ENCODE measurements at regions of chr10 and their contacts with region 1.

Region 1: GRCh38 chr10:80187465-80188409 is 17.6 kb downstream of the ANXA11 start:
- DNase-seq: peak; percentile 88
- H3K4me3 Mint-ChIP-seq: peak overlapping the region; percentile 67
- H3K27ac Mint-ChIP-seq: peak overlapping the region; percentile 95
- H3K4me1 Mint-ChIP-seq: peaks cover 73% of the 10 kb centered on the region
- H3K27me3 Mint-ChIP-seq: no peaks in the 10 kb centered on the region

Region 2: DNA sequence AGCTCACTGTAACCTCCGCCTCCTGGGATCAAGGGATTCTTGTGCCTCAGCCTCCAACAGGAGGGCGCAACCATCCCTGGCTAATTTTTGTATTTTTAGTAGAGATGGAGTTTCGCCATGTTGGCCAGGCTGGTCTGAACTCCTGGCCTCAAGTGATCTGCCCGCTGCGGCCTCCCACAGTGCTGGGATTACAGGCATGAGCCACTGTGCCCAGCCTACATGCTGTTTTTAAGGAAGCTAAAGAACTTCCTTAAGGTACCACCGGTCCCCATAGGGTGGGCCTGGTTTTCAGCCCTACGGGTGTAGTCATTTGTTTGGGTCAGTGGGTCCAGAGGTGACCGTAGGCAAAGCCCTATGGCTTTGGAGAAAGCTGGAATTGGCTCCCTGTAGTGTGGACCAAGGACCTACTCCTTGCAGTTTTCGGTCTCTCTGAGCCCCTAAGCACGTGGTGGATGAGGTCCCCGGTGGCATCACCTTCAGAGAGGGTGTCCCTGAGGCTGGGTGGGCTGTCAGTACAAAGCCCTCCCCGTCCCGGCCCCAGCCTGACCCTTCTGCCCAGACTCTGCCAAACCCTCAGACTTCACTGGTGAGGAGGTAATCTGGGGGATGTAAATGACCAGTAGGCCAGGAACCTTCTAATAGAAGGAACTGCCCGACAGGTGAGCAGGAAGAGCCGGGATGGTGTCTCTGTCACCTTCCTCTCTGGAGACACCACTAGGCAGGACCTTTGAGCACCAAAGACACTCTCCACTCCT is 12.9 kb before region 1 on chr10:
- CTCF ChIA-PET with region 1: interaction called, 5 read pairs
- POLR2A ChIA-PET with region 1: interaction called, 13 read pairs
- DNase-seq: no peak
- H3K4me3 Mint-ChIP-seq: no peak overlapping the region
- H3K27ac Mint-ChIP-seq: no peak overlapping the region
- H3K4me1 Mint-ChIP-seq: peaks cover 25% of the 10 kb centered on the region
- H3K27me3 Mint-ChIP-seq: no peaks in the 10 kb centered on the region

Region 3: DNA sequence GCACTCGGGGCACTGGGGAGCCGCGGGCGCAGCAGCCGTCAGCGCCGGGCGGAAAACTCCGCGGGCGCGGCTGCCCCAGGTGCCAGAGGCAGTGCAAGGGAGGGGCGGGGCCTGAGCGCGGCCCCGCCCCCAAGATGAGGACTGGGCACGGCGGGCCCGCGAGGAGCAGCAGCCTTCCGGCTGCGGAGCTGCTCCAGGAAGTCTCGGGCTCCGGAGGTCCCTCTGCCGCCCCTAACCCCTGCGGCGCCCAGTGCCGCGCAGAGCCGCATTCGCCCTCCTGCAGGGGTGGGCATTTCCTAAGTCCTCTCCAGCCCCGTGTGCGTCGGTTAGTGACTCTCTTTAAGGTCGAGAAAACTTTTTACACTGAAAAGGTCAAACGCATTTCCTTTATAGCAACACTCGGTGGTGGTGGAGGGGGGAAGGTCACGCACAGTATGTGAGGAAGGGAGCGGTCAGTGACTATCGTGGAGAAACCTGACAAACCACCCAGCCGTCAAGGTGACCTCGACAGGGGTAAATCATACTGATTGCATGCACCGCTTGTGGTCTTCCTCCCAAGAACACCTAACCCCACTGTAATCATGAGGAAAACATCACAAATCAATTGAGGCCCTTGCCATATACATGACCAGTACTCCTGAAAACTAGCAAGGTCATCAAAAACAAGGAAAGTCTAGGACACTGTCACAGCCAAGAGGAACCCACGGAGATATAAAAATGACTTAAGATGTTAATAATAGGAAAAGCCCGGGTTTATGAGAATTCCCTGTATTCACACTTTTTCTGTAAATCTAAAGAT is 17.9 kb after region 1 on chr10 and contains the start of gene ANXA11:
- CTCF ChIA-PET with region 1: interaction called, 42 read pairs
- POLR2A ChIA-PET with region 1: interaction called, 135 read pairs
- DNase-seq: peak; percentile 88
- H3K4me3 Mint-ChIP-seq: peak within 1 kb of the TSS; percentile 81
- H3K27ac Mint-ChIP-seq: peak within 1 kb of the TSS; percentile 90
- H3K4me1 Mint-ChIP-seq: peaks cover 43% of the 10 kb centered on the region
- H3K27me3 Mint-ChIP-seq: no peaks in the 10 kb centered on the region
- total RNA-seq, gene ANXA11: 271 to 273 TPM